ENCODE measurements at regions of chr4 and their contacts with region 1.

Region 1: GRCh38 chr4:188971125-188971524 is 831.9 kb downstream of the TRIML1 start:
- DNase-seq: peak; percentile 38
- ATAC-seq: no peak
- H3K4me3 ChIP-seq: no peak overlapping the region
- H3K27ac ChIP-seq: no peak overlapping the region
- H3K4me1 ChIP-seq: peaks cover 7% of the 10 kb centered on the region
- H3K27me3 ChIP-seq: no peaks in the 10 kb centered on the region
- CTCF ChIP-seq: peak; percentile 54

Region 2: DNA sequence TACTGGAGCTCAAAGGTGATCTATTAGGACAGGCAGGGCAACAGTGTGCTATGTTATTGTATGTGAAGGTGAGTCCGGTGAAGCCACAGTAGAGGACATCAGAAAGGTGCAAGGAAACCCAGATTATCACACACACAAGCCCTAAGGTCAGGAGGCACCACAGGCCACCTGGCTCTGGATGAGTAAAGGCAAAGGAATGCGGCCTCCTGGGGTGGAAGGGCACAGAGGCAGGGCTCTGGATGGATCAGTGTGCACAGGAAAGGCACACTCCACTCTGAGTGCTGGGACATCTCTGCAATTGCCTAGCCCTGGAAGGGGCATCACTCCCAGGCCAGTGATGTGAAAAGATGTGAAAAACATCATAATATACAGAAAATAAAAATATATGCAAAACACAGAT is 148.4 kb before region 1 on chr4:
- CTCF ChIA-PET with region 1: no interaction called
- POLR2A ChIA-PET with region 1: no interaction called
- intact Hi-C with region 1: no loop called
- DNase-seq: peak; percentile 4
- ATAC-seq: no peak
- H3K4me3 ChIP-seq: no peak overlapping the region
- H3K27ac ChIP-seq: no peak overlapping the region
- H3K4me1 ChIP-seq: no peaks in the 10 kb centered on the region
- H3K27me3 ChIP-seq: no peaks in the 10 kb centered on the region
- CTCF ChIP-seq: no peak

Region 3: DNA sequence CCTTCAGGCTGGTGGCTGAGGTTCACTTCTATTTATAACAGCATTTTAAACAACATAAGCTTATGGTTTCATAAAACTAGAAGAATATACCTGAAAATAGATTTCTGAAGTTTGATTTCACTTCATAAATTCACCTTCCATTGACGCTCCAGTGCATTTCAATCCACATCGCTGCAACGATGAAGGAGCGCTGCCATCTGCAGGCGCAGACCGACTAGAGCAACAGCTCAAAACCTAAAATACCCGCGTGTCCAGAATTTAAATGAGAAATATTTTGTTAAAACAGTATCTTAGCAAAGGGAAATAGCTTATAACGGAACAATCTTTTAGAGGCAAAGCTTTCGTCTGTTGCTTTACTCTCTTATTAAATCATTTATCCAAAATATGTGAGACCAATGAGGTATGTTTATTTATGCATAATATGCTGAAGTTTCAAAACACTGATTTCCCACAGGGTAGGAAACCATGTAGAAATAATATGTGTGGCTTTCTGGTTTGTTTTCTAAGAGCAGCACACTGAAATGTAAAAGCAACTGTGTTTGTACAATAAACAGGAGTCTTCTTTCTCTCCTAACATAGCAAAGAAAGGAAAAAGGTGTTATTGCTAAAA is 153.1 kb after region 1 on chr4:
- CTCF ChIA-PET with region 1: no interaction called
- POLR2A ChIA-PET with region 1: no interaction called
- intact Hi-C with region 1: loop called (anchors 10 kb)
- DNase-seq: peak; percentile 47
- ATAC-seq: no peak
- H3K4me3 ChIP-seq: no peak overlapping the region
- H3K27ac ChIP-seq: no peak overlapping the region
- H3K4me1 ChIP-seq: no peaks in the 10 kb centered on the region
- H3K27me3 ChIP-seq: no peaks in the 10 kb centered on the region
- CTCF ChIP-seq: peak; percentile 73